ENCODE measurements at regions of chr19 and their contacts with region 1.

Region 1: DNA sequence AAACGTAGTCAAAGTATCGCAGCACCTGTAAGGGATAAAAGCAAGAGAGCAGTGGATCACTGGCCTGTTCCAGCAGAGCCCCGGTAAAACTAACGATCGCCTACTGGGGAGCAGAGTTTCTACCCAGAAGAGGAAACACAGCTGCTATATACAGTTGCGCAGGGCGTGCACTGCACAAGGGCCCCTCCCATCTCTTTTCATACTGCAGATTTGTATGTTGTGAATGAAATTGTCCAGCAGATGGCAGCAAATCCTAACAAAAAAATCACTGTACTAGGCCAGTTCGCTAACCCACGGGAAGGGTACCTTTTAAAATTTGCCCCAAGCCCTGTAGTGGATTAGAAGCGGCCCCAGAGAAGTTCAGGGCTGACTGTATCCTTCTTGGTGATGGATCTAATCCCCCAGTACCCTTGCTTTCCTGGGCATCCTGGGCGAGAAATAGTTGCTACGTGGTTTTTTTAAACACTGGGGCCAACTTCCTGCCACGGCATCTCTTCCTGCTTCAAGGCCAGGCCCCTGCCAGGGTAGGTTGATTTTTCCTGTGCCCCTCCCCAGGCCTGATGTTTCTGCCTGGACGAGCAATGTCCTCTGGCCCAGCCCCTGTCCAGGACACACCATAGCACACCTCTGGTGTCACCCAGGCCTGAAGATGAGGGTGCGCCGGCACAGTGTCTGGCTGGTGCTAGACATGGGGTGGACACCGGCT is 127.0 kb downstream of the IER2 start:
- DNase-seq: peak; percentile 22 to 90 (median 48)
- ATAC-seq: peak; percentile 89
- H3K4me3 ChIP-seq: peak overlapping the region; percentile 15
- H3K4me3 Mint-ChIP-seq: peak overlapping the region; percentile 42
- H3K27ac ChIP-seq: peak overlapping the region in 1 of 2 donors; percentile 66
- H3K27ac Mint-ChIP-seq: peak overlapping the region; percentile 65
- H3K4me1 ChIP-seq: peaks cover 29% of the 10 kb centered on the region
- H3K4me1 Mint-ChIP-seq: peaks cover 22% of the 10 kb centered on the region
- H3K27me3 ChIP-seq: no peaks in the 10 kb centered on the region
- H3K27me3 Mint-ChIP-seq: no peaks in the 10 kb centered on the region
- CTCF ChIP-seq: peak; percentile 68

Region 2: DNA sequence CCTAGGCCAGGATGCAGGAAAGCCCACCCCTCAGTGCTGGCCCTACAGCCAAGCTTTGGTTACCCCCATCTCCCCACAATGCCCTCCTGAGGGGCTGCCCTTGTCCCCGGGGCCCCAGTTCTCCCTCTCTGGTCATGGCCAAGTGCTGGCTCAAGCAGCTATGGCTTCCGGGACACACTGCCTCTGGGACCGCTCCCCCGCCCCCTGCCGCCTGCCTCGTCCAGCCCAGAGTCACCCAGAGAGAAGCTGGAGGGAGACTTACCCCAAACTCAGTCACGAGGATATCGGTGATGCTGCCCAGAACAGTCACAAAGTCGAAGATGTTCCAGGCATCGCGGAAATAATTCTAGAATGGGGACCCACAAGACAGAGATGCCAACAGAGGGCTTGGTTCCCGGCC is 32.3 kb before region 1 on chr19:
- CTCF ChIA-PET with region 1: no interaction called
- POLR2A ChIA-PET with region 1: no interaction called
- intact Hi-C with region 1: no loop called
- DNase-seq: no peak
- ATAC-seq: no peak
- H3K4me3 ChIP-seq: no peak overlapping the region
- H3K4me3 Mint-ChIP-seq: no peak overlapping the region
- H3K27ac ChIP-seq: no peak overlapping the region
- H3K27ac Mint-ChIP-seq: no peak overlapping the region
- H3K4me1 ChIP-seq: peaks cover 10% of the 10 kb centered on the region
- H3K4me1 Mint-ChIP-seq: peaks cover 23% of the 10 kb centered on the region
- H3K27me3 ChIP-seq: no peaks in the 10 kb centered on the region
- H3K27me3 Mint-ChIP-seq: no peaks in the 10 kb centered on the region
- CTCF ChIP-seq: no peak

Region 3: DNA sequence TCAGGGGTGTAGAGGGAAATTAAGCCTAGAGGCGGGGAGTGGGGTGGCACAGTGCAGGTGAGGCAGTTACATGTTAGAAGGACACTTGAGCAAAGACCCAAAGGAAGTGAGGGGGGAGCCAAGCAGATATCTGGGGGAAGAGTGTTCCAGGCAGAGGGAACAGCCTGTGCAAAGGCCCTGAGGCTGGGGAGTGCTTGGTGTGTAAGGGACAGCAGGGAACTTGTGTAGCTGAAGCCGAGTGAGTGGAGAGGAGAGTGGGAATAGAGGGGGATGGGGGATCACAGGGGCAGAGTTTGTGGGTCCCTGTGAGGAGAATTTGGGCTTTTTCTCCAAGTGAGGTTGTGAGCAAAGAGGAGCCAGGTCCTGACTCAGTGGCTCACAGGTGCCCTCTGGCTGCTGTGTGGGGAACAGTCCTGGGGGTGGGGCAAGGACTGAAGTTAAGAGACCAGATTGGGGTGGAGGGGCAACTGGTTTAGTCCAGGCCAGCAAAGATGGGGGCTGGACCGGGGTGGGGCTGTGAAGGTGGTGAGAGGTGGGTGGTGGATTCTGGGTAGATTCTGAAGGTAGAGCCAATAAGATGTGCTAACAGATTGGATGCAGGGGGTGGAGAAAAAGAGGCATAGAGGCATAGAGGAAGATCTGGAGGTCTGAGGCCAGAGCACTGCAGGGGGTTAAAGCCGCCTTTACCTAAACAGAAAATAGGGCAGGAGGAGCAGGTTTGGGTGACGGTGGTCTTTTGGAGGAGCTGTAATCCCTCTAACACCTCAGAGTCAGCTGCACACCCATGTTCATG is 153.7 kb after region 1 on chr19:
- CTCF ChIA-PET with region 1: interaction called, 6 read pairs
- POLR2A ChIA-PET with region 1: no interaction called
- intact Hi-C with region 1: loop called (anchors 1 kb)
- DNase-seq: peak; percentile 11 to 67 (median 38)
- ATAC-seq: peak; percentile 48
- H3K4me3 ChIP-seq: no peak overlapping the region
- H3K4me3 Mint-ChIP-seq: no peak overlapping the region
- H3K27ac ChIP-seq: no peak overlapping the region
- H3K27ac Mint-ChIP-seq: no peak overlapping the region
- H3K4me1 ChIP-seq: no peaks in the 10 kb centered on the region
- H3K4me1 Mint-ChIP-seq: no peaks in the 10 kb centered on the region
- H3K27me3 ChIP-seq: peaks cover 5 to 8% of the 10 kb centered on the region in 2 experiments
- H3K27me3 Mint-ChIP-seq: peaks cover 27% of the 10 kb centered on the region
- CTCF ChIP-seq: peak; percentile 59

Region 4: DNA sequence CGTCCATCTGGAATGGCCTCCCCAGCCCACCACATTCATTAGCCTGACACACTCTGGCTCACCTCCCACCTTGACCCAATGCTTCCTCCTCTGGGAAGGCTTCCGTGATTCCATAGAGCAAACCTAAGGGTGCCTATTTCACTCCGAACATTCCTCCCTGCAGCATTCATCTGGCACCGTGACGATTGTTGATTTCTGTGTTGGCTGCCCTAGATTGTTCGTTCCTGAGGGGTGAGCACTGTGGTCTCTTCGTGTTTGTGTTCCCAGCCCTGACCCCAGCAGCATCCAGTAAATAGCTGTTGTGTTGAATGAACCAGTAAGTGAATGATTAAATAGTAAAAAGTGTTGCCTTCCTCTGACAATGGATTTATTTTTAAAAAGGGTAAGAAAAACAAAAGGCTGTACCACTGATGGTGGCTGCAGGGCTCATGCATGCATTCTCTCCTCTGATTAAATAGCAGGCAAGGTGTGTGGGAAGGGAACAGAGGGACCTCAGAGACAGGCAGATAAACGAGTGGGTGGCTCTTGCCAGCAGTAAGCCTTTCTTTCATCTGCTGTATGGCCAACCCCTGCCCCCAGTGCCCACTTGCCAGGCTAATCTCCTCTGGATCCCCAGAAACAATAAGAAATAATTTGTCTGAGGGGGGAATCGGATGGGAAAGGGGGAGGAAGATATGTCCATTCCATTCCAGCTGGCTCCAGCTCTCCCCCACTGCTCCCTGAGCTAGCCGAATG is 277.4 kb after region 1 on chr19:
- CTCF ChIA-PET with region 1: no interaction called
- POLR2A ChIA-PET with region 1: no interaction called
- intact Hi-C with region 1: no loop called
- DNase-seq: no peak
- ATAC-seq: no peak
- H3K4me3 ChIP-seq: no peak overlapping the region
- H3K4me3 Mint-ChIP-seq: no peak overlapping the region
- H3K27ac ChIP-seq: no peak overlapping the region
- H3K27ac Mint-ChIP-seq: no peak overlapping the region
- H3K4me1 ChIP-seq: no peaks in the 10 kb centered on the region
- H3K4me1 Mint-ChIP-seq: no peaks in the 10 kb centered on the region
- H3K27me3 ChIP-seq: peaks cover 3 to 6% of the 10 kb centered on the region in 2 experiments
- H3K27me3 Mint-ChIP-seq: peaks cover 49% of the 10 kb centered on the region
- CTCF ChIP-seq: no peak

Region 5: GRCh38 chr19:13588957-13589833 is 311.9 kb after region 1 on chr19:
- CTCF ChIA-PET with region 1: interaction called, 23 read pairs
- POLR2A ChIA-PET with region 1: interaction called, 3 read pairs
- intact Hi-C with region 1: loop called (anchors 1 kb)
- DNase-seq: peak; percentile 61 to 88 (median 80)
- ATAC-seq: peak; percentile 97
- H3K4me3 ChIP-seq: no peak overlapping the region
- H3K4me3 Mint-ChIP-seq: no peak overlapping the region
- H3K27ac ChIP-seq: no peak overlapping the region
- H3K27ac Mint-ChIP-seq: no peak overlapping the region
- H3K4me1 ChIP-seq: peaks cover 9% of the 10 kb centered on the region
- H3K4me1 Mint-ChIP-seq: no peaks in the 10 kb centered on the region
- H3K27me3 ChIP-seq: peaks cover 0 to 12% of the 10 kb centered on the region in 2 experiments
- H3K27me3 Mint-ChIP-seq: peaks cover 20% of the 10 kb centered on the region
- CTCF ChIP-seq: peak; percentile 99